Motor neuron (in vitro differentiated cells): ENCODE measurements at regions of chr1 and their contacts with region 1.

Region 1: GRCh38 chr1:21378705-21379494 is 61.0 kb upstream of the NBPF3 start:
- ATAC-seq: peak in 5 of 8 experiments; percentile 29 to 71 (median 61)
- H3K4me3 ChIP-seq: no peak overlapping the region
- H3K27ac ChIP-seq: no peak overlapping the region
- H3K4me1 ChIP-seq: no peaks in the 10 kb centered on the region

Region 2: GRCh38 chr1:20448671-20449071 is 930.2 kb before region 1 on chr1:
- in situ Hi-C with region 1: no loop called
- ATAC-seq: peak in 5 of 8 experiments; percentile 80 to 87 (median 84)
- H3K4me3 ChIP-seq: no peak overlapping the region
- H3K27ac ChIP-seq: peak overlapping the region; percentile 39 to 40
- H3K4me1 ChIP-seq: peaks cover 24 to 26% of the 10 kb centered on the region in 2 donors

Region 3: DNA sequence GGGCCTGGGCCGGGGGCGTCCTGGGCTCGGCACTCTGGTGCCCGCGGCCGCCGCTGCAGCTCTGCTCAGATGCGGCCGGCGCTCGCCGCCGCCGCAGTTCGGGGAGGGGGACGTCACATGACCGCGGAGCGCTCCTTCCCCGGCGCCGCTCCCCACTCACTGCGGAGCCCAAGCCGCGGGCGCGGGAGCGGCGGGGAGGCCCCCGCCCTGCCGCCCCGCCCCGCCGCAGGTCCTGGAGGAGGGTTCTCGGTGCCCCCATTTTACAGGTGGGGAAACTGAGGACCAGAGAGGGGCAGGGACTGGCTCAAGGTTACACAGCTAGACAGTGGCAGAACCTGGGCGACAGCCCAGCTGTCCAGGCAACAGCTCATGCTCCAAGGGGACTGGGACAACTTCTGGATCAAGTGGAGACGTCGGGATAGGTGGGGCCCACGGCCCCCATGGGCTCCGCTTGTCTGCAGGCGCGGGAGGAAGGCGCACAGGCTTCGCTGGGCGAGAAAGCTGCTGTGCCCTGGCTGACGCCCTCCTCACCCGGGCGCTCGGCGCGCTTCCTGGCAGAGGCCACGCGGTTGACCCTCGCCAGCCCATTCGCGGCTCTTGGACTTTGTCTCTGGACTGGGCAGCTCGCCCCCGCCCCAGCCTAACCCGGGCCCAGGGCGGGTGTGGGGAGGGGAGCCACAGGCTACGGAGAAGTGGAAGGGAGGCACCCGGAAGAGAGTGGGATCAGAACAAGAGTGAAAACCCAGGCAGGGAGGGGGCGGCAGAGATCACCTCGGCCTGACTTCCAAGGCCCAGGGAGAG is 290.6 kb after region 1 on chr1 and contains the start of gene RAP1GAP:
- in situ Hi-C with region 1: loop called in 1 of 9 experiments (anchors 10 kb)
- ATAC-seq: peak; percentile 41 to 74 (median 59)
- H3K4me3 ChIP-seq: peak within 1 kb of the TSS; percentile 43 to 85 (median 50)
- H3K27ac ChIP-seq: peak within 1 kb of the TSS in 1 of 2 donors; percentile 50
- H3K4me1 ChIP-seq: peaks cover 32 to 33% of the 10 kb centered on the region in 2 donors
- total RNA-seq, gene RAP1GAP: 0.31 to 22.8 (median 11.3) TPM